ENCODE measurements at regions of chr2 and their contacts with region 1.

Region 1: GRCh38 chr2:222903234-222904220 is 42.7 kb downstream of the ACSL3 start:
- DNase-seq: peak; percentile 67
- H3K4me3 ChIP-seq: no peak overlapping the region
- H3K27ac ChIP-seq: no peak overlapping the region
- H3K4me1 ChIP-seq: peaks cover 6% of the 10 kb centered on the region
- CTCF ChIP-seq: peak; percentile 90

Region 2: GRCh38 chr2:222690564-222691200 is 212.8 kb before region 1 on chr2:
- CTCF ChIA-PET with region 1: no interaction called
- POLR2A ChIA-PET with region 1: no interaction called
- intact Hi-C with region 1: loop called (anchors 1 kb)
- DNase-seq: peak; percentile 89
- H3K4me3 ChIP-seq: no peak overlapping the region
- H3K27ac ChIP-seq: no peak overlapping the region
- H3K4me1 ChIP-seq: no peaks in the 10 kb centered on the region
- CTCF ChIP-seq: peak; percentile 100

Region 3: DNA sequence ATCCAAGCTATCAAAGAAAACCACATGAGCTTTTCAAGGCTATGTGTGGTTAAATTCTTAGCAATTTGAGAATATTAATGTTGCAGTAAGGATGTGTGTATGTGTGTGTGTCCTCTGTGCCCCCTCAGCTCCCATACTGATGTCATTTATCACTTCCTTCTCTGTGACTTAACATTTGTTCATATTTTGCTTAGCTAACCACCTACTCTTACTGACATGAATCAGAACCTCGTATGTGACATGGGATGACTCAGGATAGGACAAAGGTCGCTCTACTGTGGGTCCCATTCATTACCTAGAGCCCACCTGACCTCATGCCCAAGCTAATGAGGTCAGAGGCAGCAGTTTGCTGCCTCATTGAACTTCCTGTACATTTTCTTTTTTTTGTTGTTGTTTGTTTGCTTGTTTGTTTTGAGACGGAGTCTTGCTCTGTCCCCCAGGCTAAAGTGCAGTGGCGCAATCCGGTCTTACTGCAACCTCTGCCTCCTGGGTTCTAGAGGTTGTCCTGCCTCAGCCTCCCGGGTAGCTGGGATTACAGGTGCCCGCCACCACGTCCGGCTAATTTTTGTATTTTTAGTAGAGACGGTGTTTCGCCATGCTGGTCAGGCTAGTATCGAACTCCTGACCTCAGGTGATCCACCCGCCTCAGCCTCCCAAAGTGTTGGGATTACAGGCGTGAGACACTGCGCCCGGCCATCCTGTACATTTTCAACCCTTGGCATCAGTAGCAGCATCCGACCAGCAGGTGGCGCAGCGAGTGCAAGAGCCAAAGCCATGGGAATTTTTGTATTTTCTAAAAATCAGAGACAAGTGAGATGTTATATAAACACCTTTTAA is 195.6 kb before region 1 on chr2:
- CTCF ChIA-PET with region 1: interaction called, 3 read pairs
- POLR2A ChIA-PET with region 1: interaction called, 5 read pairs
- intact Hi-C with region 1: loop called (anchors 1 kb)
- DNase-seq: peak; percentile 76
- H3K4me3 ChIP-seq: no peak overlapping the region
- H3K27ac ChIP-seq: no peak overlapping the region
- H3K4me1 ChIP-seq: peaks cover 17% of the 10 kb centered on the region
- CTCF ChIP-seq: peak; percentile 96

Region 4: DNA sequence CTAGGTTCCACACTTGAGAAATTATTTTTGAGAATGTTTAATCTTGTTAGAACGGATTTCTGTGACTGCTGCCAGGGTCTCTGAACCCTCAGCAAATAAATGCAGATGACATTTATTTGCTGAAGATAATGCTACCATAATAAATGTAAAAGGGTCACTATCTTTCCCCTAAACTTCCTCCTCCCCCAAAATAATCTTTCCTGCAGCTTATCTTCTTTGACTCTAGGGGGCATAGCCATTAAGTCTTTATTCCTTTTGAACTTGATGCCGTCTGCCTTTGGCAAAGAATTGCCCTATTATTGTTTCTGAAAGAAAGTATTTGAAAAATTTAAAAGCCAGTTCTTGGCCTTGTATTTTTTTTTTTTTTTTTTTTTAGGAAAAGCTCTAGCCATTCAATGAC is 106.3 kb before region 1 on chr2:
- CTCF ChIA-PET with region 1: no interaction called
- POLR2A ChIA-PET with region 1: interaction called, 4 read pairs
- intact Hi-C with region 1: loop called (anchors 1 kb)
- DNase-seq: peak; percentile 39
- H3K4me3 ChIP-seq: no peak overlapping the region
- H3K27ac ChIP-seq: no peak overlapping the region
- H3K4me1 ChIP-seq: peaks cover 51% of the 10 kb centered on the region
- CTCF ChIP-seq: peak; percentile 80

Region 5: DNA sequence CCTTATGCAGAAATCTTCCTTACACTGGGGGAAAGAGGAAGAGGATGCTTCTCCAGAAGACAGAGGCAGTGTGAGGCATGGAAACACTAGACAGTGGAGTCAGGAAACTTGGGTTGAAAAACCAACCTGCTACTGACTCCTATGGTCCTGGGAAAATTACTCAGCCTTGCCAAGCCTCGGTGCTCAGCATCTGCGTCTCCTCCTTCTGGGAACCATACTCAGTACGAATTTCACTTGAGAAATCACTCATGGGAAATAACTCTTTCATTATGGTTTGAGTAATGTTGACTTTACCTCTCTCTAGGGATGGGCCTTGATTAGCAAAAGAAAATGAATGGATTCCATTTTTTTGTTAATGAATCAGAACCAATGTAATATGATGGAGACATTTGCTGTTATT is 245.0 kb after region 1 on chr2:
- CTCF ChIA-PET with region 1: no interaction called
- POLR2A ChIA-PET with region 1: no interaction called
- intact Hi-C with region 1: no loop called
- DNase-seq: no peak
- H3K4me3 ChIP-seq: no peak overlapping the region
- H3K27ac ChIP-seq: no peak overlapping the region
- H3K4me1 ChIP-seq: no peaks in the 10 kb centered on the region
- CTCF ChIP-seq: no peak

Measured in OCI-LY7 (cell line).